ENCODE measurements at regions of chr17 and their contacts with region 1.

Region 1: DNA sequence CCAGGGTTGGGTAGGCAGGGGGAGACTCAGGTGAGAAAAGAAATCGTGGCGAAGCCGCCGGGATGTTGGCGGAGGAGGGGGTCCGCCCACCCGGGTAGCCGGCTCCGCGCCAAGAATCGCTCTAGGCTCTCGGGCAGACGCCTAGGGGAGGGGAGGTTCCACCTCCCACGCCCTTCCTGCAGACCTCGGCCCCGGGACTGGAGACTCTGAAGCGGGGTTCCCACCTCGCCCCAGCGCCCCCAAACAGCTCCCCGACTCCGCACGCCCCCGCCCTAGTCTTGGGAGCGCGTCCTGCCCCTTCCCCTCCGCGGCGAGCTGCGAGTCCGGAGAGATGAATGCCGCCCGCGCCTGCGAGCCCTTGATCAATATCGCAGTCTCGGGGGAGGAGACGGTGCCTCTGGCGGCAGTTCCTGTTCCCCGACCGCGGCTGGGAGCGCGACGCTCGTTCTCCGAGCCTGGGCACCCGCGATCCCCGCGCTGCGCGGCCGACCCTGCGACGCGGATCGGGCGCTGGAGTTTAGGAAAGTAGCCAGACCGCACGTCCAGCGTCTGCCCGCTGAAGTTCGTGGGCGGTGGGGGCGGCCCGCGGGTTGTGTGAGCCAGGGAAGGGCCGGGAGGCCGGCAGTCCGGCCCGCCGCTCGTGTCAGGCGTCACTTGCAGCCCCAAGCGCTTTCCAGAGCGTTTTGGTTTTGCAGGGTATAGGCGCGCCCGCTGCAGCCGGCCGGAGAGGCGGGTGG is 791 bp downstream of the CRHR1 start:
- DNase-seq: peak; percentile 64
- ATAC-seq: peak; percentile 43
- H3K4me3 ChIP-seq: peak overlapping the region in 4 of 5 experiments; percentile 40 to 69 (median 54)
- H3K4me3 Mint-ChIP-seq: peak overlapping the region; percentile 82
- H3K27ac ChIP-seq: no peak overlapping the region
- H3K27ac Mint-ChIP-seq: no peak overlapping the region
- H3K4me1 ChIP-seq: peaks cover 20 to 22% of the 10 kb centered on the region in 2 donors
- H3K4me1 Mint-ChIP-seq: peaks cover 15% of the 10 kb centered on the region
- H3K27me3 ChIP-seq: peaks cover 0 to 70% (median 42%) of the 10 kb centered on the region in 4 experiments
- H3K27me3 Mint-ChIP-seq: peaks cover 71% of the 10 kb centered on the region
- CTCF ChIP-seq: no peak

Region 2: DNA sequence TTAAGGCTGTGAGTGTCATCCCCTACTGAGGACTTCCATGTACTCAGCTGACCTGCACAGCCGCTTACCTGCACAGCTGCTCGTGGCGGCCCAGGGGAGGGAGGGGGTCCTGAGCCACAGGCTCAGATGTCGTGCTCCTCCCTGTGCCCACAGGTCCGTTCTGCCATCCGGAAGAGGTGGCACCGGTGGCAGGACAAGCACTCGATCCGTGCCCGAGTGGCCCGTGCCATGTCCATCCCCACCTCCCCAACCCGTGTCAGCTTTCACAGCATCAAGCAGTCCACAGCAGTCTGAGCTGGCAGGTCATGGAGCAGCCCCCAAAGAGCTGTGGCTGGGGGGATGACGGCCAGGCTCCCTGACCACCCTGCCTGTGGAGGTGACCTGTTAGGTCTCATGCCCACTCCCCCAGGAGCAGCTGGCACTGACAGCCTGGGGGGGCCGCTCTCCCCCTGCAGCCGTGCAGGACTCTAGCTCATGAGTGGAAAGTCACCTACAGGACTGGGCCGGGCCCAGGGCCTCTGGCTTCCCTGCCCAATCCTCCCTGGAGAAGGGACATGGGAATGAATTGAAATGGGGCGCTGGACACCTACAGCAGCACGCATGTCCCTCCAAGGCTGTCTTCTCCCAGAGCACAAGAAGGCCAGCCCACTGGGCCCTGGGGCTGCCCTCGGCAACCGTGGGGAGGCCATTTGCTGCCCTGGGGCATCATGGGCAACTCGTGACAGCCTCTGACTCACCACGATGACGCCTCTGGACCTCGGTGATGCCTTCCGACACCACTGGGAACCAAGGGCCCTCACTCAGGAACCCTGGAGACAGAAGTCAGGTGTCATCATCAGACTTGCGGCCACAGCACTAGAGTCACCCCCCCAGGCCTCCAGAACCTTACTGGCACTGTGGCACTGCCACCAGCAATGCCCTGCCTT is 49.8 kb after region 1 on chr17:
- CTCF ChIA-PET with region 1: interaction called, 4 read pairs
- POLR2A ChIA-PET with region 1: no interaction called
- intact Hi-C with region 1: loop called (anchors 5 kb)
- DNase-seq: no peak
- ATAC-seq: no peak
- H3K4me3 ChIP-seq: no peak overlapping the region
- H3K4me3 Mint-ChIP-seq: no peak overlapping the region
- H3K27ac ChIP-seq: no peak overlapping the region
- H3K27ac Mint-ChIP-seq: no peak overlapping the region
- H3K4me1 ChIP-seq: no peaks in the 10 kb centered on the region
- H3K4me1 Mint-ChIP-seq: no peaks in the 10 kb centered on the region
- H3K27me3 ChIP-seq: peaks cover 0 to 6% (median 0%) of the 10 kb centered on the region in 4 experiments
- H3K27me3 Mint-ChIP-seq: peaks cover 9% of the 10 kb centered on the region
- CTCF ChIP-seq: no peak